ENCODE measurements at regions of chr3 and their contacts with region 1.

Region 1: DNA sequence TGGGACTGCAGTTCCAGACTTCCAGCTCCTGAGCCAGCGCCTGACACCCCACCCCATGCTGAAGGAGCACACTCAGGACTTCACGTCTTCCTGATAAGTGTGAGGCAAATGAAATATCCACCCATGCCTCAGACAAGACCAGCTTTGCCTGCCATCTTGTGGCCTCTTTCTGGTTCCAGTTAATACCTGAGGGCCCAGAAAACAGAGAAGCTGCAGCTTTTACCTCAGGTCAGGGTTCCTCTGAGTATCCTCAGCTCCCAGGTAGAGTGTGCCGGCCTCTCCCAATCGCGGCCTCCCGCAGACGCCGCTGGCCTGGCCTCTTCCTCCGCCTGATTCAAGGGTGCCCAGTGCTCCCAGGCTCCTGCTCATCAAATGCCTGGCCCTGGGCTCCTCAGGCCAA is 5.1 kb upstream of the KLHL6 start:
- DNase-seq: peak in 1 of 10 donors; percentile 49

Region 2: GRCh38 chr3:183477801-183478456 is 82.7 kb before region 1 on chr3:
- intact Hi-C with region 1: loop called (anchors 10 kb)
- DNase-seq: no peak

Measured in posterior cingulate gyrus (tissue), 11 donors.